Prostate gland (tissue), 2 donors: ENCODE measurements at regions of chr2 and their contacts with region 1.

Region 1: DNA sequence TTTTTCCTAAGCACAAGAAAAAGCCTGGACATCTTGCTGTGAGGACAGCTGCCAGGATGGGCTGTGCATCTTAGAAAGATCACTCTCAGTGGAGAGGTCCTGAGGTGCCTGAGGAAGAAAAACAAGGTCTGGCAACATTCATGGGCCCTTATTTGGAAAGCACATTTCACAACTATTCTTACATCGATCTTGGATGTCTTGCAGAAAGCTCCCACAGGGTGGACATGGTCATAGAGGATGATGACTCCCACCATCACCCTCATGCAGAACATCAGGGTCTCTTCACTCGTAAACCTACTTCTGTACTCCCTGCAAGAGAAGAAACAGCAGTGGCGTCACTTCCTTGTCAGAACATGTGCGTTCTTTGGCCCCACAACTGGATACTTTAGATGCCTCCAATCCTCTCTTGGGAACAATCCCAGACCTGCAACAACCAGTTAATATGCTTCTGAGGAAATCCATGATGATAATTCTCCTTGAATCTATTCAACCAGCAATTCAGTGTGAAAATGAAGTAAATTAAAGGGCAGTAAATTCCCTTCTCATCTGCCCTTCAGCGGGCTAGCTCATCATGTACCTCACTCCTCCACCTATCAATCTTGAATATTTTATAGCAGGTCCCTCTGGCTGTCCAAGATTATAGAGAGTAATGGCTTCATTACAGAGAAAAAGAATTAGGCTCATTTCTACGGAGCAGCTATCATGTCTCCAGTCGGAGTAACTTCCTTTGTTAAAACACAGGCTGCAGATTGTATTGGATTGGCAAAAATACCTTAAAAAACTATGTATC is 106.2 kb downstream of the CYRIA start:
- DNase-seq: no peak
- H3K4me3 ChIP-seq: no peak overlapping the region
- H3K27ac ChIP-seq: no peak overlapping the region
- H3K4me1 ChIP-seq: no peaks in the 10 kb centered on the region
- H3K27me3 ChIP-seq: no peaks in the 10 kb centered on the region
- CTCF ChIP-seq: no peak
- POLR2A ChIP-seq: no peak

Region 2: GRCh38 chr2:16608661-16609643 is 49.5 kb after region 1 on chr2:
- intact Hi-C with region 1: loop called (anchors 5 kb)
- DNase-seq: peak; percentile 67
- H3K4me3 ChIP-seq: peak overlapping the region; percentile 17 to 29
- H3K27ac ChIP-seq: no peak overlapping the region
- H3K4me1 ChIP-seq: no peaks in the 10 kb centered on the region
- H3K27me3 ChIP-seq: no peaks in the 10 kb centered on the region
- CTCF ChIP-seq: peak; percentile 80 to 92 (median 91)
- POLR2A ChIP-seq: no peak